CD8-positive, alpha-beta memory T cell (primary cell): ENCODE measurements at regions of chr12 and their contacts with region 1.

Region 1: GRCh38 chr12:71780237-71780822 is 25.7 kb downstream of the RAB21 start:
- DNase-seq: peak; percentile 10 to 58 (median 15)
- H3K4me3 ChIP-seq: no peak overlapping the region
- H3K4me3 Mint-ChIP-seq: no peak overlapping the region
- H3K27ac ChIP-seq: no peak overlapping the region
- H3K27ac Mint-ChIP-seq: peak overlapping the region in 7 of 8 donors; percentile 3 to 61 (median 30)
- H3K4me1 ChIP-seq: no peaks in the 10 kb centered on the region
- H3K4me1 Mint-ChIP-seq: peaks cover 6 to 18% (median 13%) of the 10 kb centered on the region in 3 donors
- H3K27me3 ChIP-seq: no peaks in the 10 kb centered on the region
- H3K27me3 Mint-ChIP-seq: no peaks in the 10 kb centered on the region

Region 2: GRCh38 chr12:71791473-71792150 is 11.3 kb after region 1 on chr12:
- CTCF ChIA-PET with region 1: interaction called, 10 read pairs
- POLR2A ChIA-PET with region 1: no interaction called
- DNase-seq: no peak
- H3K4me3 ChIP-seq: no peak overlapping the region
- H3K4me3 Mint-ChIP-seq: no peak overlapping the region
- H3K27ac ChIP-seq: no peak overlapping the region
- H3K27ac Mint-ChIP-seq: peak overlapping the region in 2 of 8 donors; percentile 16 to 25
- H3K4me1 ChIP-seq: no peaks in the 10 kb centered on the region
- H3K4me1 Mint-ChIP-seq: peaks cover 0 to 5% (median 4%) of the 10 kb centered on the region in 3 donors
- H3K27me3 ChIP-seq: no peaks in the 10 kb centered on the region
- H3K27me3 Mint-ChIP-seq: no peaks in the 10 kb centered on the region

Region 3: GRCh38 chr12:71846322-71846940 is 66.1 kb after region 1 on chr12:
- CTCF ChIA-PET with region 1: interaction called, 10 read pairs
- POLR2A ChIA-PET with region 1: interaction called, 3 read pairs
- DNase-seq: peak in 2 of 5 donors; percentile 7 to 43
- H3K4me3 ChIP-seq: no peak overlapping the region
- H3K4me3 Mint-ChIP-seq: no peak overlapping the region
- H3K27ac ChIP-seq: no peak overlapping the region
- H3K27ac Mint-ChIP-seq: peak overlapping the region in 5 of 8 donors; percentile 7 to 69 (median 18)
- H3K4me1 ChIP-seq: peaks cover 20% of the 10 kb centered on the region
- H3K4me1 Mint-ChIP-seq: peaks cover 26 to 50% (median 39%) of the 10 kb centered on the region in 3 donors
- H3K27me3 ChIP-seq: no peaks in the 10 kb centered on the region
- H3K27me3 Mint-ChIP-seq: no peaks in the 10 kb centered on the region